Endothelial cell of umbilical vein (primary cell): ENCODE measurements at regions of chr1 and their contacts with region 1.

Region 1: GRCh38 chr1:169711469-169712281 is at the start of gene SELL:
- DNase-seq: peak; percentile 86
- H3K4me3 ChIP-seq: peak within 1 kb of the TSS in 1 of 3 experiments; percentile 42
- H3K27ac ChIP-seq: no peak within 1 kb of the TSS
- H3K4me1 ChIP-seq: no peaks in the 10 kb centered on the region
- H3K27me3 ChIP-seq: peaks cover 0 to 6% of the 10 kb centered on the region in 2 experiments
- CTCF ChIP-seq: peak; percentile 77 to 82
- POLR2A ChIP-seq: no peak
- total RNA-seq, gene SELL: 0.67 and 1.8 TPM in 2 replicates

Region 2: GRCh38 chr1:169390303-169390702 is 321.4 kb before region 1 on chr1:
- CTCF ChIA-PET with region 1: no interaction called
- POLR2A ChIA-PET with region 1: no interaction called
- dilution Hi-C with region 1: no loop called
- intact Hi-C with region 1: no loop called
- DNase-seq: no peak
- H3K4me3 ChIP-seq: no peak overlapping the region
- H3K27ac ChIP-seq: no peak overlapping the region
- H3K4me1 ChIP-seq: no peaks in the 10 kb centered on the region
- H3K27me3 ChIP-seq: no peaks in the 10 kb centered on the region
- CTCF ChIP-seq: no peak
- POLR2A ChIP-seq: no peak

Region 3: DNA sequence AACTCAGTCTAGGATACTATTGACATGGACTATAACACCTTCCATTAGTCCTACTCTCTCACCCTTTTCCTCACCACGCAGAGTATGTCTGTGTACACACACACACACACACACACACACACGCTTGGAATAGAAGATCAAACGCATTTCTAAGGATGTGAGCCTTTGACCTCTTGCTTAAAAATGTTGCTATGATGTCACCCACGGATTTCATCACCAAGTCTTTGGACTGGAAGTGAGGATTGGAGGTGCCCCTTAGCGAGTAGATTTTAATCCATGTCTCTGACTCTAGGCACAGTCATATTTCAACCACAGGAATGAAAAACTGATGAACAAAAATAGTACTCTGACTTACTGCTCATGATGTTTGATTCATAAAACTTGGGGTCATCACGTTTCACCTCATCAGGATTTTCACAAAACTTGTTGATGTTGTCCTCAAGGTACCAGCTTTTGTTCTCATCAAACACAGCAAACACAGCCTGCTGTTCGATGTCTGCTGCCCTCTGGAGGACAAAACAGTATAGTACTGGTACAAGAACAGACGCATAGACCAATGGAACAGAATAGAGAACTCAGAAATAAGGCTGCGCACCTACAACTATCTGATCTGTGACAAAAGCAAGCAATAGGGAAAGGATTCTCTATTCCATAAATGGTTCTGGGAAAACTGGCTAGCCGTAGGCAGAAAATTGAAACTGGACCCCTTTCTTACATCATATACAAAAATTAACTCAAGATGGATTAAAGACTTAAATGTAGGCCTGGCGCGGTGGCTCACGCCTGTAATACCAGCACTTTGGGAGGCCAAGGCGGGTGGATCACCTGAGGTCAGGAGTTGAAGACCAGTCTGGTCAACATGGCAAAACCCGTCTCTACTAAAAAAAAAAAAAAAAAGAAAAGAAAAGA is 165.3 kb before region 1 on chr1:
- CTCF ChIA-PET with region 1: interaction called, 36 read pairs
- POLR2A ChIA-PET with region 1: no interaction called
- dilution Hi-C with region 1: no loop called
- intact Hi-C with region 1: loop called (anchors 1 kb)
- DNase-seq: peak; percentile 66
- H3K4me3 ChIP-seq: no peak overlapping the region
- H3K27ac ChIP-seq: no peak overlapping the region
- H3K4me1 ChIP-seq: no peaks in the 10 kb centered on the region
- H3K27me3 ChIP-seq: peaks cover 0 to 2% of the 10 kb centered on the region in 2 experiments
- CTCF ChIP-seq: peak; percentile 63 to 66
- POLR2A ChIP-seq: no peak

Region 4: GRCh38 chr1:169601093-169601881 is 110.4 kb before region 1 on chr1:
- CTCF ChIA-PET with region 1: interaction called, 230 read pairs
- POLR2A ChIA-PET with region 1: no interaction called
- dilution Hi-C with region 1: no loop called
- intact Hi-C with region 1: loop called (anchors 1 kb)
- DNase-seq: peak; percentile 66
- H3K4me3 ChIP-seq: no peak overlapping the region
- H3K27ac ChIP-seq: no peak overlapping the region
- H3K4me1 ChIP-seq: no peaks in the 10 kb centered on the region
- H3K27me3 ChIP-seq: peaks cover 0 to 6% of the 10 kb centered on the region in 2 experiments
- CTCF ChIP-seq: peak; percentile 20 to 31
- POLR2A ChIP-seq: no peak

Region 5: DNA sequence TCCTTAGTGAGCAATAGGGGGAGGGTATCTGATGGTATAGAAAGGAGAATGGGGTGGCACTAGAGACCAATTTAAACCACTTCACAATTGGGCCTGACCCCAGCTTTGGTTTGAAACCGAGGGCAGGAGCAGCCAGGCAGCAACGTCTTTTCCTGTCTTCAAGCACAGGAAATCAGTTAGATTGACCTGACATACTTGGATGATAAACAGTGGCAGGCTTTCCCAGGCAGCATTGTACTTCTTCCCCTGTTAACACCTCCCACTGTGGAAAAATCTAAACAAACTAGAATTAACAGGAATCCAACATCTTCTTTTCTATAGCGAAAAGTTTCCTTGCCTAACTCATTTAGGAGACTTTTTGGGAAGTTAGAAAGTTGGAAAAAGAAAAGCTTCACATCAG is 40.8 kb before region 1 on chr1:
- CTCF ChIA-PET with region 1: interaction called, 15 read pairs
- POLR2A ChIA-PET with region 1: no interaction called
- dilution Hi-C with region 1: no loop called
- intact Hi-C with region 1: loop called (anchors 1 kb)
- DNase-seq: peak; percentile 86
- H3K4me3 ChIP-seq: no peak overlapping the region
- H3K27ac ChIP-seq: peak overlapping the region; percentile 38
- H3K4me1 ChIP-seq: peaks cover 25% of the 10 kb centered on the region
- H3K27me3 ChIP-seq: no peaks in the 10 kb centered on the region
- CTCF ChIP-seq: no peak
- POLR2A ChIP-seq: no peak

Region 6: DNA sequence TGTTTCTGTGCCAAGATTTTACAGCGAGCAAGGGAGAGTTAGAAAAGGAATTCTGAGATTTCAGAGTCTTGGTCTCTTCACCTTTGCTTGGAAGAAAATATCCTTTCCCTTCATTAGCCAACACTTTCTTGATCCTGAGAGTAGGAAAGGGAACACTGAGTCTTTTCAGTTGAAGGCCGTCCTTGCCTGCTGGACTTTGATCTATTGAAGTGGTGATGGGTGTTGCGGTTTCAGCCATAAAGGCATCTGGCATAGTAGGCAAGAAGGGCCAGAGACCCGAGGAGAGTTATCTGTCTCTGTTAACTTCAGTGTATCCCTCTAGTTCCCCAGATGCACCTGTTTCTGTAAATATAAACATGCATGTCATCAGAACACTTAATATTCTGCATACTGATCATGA is 12.5 kb after region 1 on chr1:
- CTCF ChIA-PET with region 1: interaction called, 17 read pairs
- POLR2A ChIA-PET with region 1: no interaction called
- dilution Hi-C with region 1: no loop called
- intact Hi-C with region 1: no loop called
- DNase-seq: no peak
- H3K4me3 ChIP-seq: no peak overlapping the region
- H3K27ac ChIP-seq: no peak overlapping the region
- H3K4me1 ChIP-seq: no peaks in the 10 kb centered on the region
- H3K27me3 ChIP-seq: peaks cover under 1 to 11% of the 10 kb centered on the region in 2 experiments
- CTCF ChIP-seq: no peak
- POLR2A ChIP-seq: no peak

Region 7: DNA sequence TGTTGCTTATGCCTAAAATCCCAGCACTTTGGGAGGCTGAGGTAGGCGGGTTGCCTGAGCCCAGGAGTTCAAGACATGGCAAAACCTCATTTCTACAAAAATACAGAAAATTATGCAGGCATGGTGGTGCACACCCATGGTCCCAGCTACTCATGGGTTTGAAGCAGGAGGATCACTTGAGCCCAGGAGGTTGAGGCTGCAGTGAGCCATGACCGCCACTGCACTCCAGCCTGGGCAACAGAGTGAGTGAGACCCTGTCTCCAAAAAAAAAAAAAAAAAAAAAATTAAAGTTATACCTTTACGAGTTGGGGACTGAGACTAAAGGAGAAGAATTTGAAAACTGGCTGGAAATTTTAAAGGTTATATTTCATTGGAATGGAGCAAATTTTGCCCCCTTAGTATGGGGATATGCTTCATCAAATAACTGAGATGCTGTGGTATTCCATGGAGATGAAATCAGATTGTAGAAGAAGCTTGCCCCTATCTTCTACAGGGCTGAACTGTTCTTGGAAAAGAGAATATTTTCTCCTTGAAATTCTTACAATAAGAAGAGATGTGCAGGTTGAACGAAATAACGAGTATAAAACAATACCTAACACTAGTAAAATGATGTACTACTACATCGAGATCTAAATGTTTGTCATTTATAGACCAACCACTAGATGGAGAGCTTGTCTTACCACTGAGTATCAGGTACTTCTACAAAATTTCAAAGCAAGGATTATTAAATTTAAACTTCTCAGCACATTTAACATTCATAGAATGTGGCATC is 216.9 kb after region 1 on chr1:
- CTCF ChIA-PET with region 1: no interaction called
- POLR2A ChIA-PET with region 1: no interaction called
- dilution Hi-C with region 1: no loop called
- intact Hi-C with region 1: no loop called
- DNase-seq: peak; percentile 55
- H3K4me3 ChIP-seq: no peak overlapping the region
- H3K27ac ChIP-seq: no peak overlapping the region
- H3K4me1 ChIP-seq: no peaks in the 10 kb centered on the region
- H3K27me3 ChIP-seq: no peaks in the 10 kb centered on the region
- CTCF ChIP-seq: peak; percentile 30 to 49
- POLR2A ChIP-seq: no peak

Region 8: DNA sequence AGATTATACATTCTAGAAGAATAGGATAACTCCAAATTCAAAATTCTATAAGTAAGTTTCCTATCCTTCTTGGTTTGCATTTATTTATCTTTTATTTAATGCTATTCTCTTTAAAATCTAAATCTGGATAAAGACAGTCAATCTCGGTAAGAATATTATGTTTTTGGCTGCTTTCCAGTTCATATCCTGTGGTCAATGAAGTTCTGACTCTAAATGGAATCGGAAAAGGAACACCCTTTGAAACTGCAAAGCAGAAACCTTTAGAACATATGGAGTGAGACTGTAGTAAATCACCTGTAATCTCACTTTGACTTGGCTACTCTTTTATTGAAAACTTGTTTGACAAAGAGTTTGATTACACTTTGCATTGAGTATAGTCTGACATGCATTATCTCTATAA is 277.6 kb after region 1 on chr1:
- CTCF ChIA-PET with region 1: no interaction called
- POLR2A ChIA-PET with region 1: no interaction called
- dilution Hi-C with region 1: no loop called
- intact Hi-C with region 1: no loop called
- DNase-seq: peak; percentile 31
- H3K4me3 ChIP-seq: no peak overlapping the region
- H3K27ac ChIP-seq: no peak overlapping the region
- H3K4me1 ChIP-seq: peaks cover 10% of the 10 kb centered on the region
- H3K27me3 ChIP-seq: no peaks in the 10 kb centered on the region
- CTCF ChIP-seq: no peak
- POLR2A ChIP-seq: no peak